ENCODE measurements at regions of chr18 and their contacts with region 1.

Region 1: DNA sequence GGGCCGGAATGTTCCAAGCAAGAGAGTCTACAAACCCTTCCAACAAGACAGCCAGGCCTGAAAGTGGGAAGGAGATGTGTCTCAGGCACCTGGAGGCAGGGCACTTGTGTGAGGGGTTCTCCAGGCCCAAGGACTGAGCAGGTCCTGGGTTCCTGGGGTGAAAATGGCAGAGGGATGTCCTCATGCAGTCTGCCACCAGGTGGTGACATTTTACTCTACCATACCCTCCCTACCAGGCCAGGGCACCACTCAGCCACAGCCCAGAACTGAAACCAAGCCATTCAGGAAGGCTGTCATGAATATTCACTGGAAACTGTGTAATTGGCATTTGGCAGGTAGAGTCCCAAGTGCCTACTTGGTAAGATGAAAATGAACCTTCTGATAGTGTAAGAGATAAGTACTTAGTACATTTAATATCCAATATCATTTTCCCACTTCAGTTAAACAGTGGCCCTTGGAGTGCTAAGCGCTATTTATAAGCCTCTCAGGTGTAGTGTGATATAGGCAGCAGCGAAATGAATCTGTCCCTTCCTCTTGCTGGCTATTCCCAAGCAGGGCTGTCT is 185.1 kb downstream of the MYO5B start:
- DNase-seq: peak; percentile 83
- H3K4me3 Mint-ChIP-seq: no peak overlapping the region
- H3K27ac Mint-ChIP-seq: no peak overlapping the region
- H3K4me1 Mint-ChIP-seq: peaks cover 1% of the 10 kb centered on the region
- H3K27me3 Mint-ChIP-seq: peaks cover 6% of the 10 kb centered on the region

Region 2: DNA sequence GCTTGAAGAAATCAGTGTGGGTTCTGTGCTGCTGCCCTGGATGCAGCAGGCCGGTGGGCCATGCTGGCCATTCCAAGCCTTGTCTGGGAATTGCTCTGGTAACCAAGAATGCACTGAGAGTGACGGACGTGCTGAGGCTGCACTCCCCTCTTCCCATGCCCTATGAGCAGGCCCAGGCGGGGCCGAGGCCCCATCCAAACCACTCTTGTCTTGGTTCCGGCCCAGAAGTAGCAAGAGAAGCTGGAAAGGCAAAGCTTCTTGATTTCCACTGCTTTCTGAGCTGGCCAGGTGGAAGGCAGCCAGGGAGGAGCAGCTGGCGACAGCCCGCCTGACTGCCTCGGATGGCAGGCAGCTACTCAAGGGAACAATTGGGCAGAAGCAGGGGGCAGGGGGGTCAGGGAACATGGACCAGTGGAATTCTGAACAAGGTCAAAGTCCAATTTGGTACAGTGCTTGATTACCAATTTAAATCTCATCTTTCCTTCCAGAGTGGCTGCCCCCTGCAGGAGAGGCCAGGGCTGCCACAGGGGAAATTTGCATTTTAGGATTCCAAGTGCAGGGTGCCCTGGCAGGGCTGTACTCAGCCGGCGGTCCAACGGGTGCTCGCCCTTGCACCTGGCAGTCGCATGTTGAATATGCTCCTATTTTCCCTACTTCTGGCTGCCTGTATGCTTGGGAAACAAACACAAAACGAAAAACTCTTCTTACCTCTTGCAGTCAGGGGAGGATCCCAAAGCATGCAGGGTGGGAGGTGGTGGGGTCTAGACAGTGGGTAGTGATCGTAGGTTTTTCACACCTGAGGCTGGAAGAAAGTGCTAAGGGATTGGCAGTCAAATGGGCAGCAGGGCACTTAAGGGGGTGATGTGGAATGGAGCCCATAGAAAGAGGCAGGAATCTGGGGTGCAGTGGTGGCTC is 380.7 kb before region 1 on chr18:
- intact Hi-C with region 1: no loop called
- DNase-seq: no peak
- H3K4me3 Mint-ChIP-seq: no peak overlapping the region
- H3K27ac Mint-ChIP-seq: no peak overlapping the region
- H3K4me1 Mint-ChIP-seq: no peaks in the 10 kb centered on the region
- H3K27me3 Mint-ChIP-seq: peaks cover 1% of the 10 kb centered on the region

Region 3: GRCh38 chr18:50194631-50195532 is 185.0 kb after region 1 on chr18 and contains the start of gene MYO5B:
- intact Hi-C with region 1: loop called (anchors 10 kb)
- DNase-seq: peak; percentile 84
- H3K4me3 Mint-ChIP-seq: peak within 1 kb of the TSS; percentile 68
- H3K27ac Mint-ChIP-seq: peak within 1 kb of the TSS; percentile 44
- H3K4me1 Mint-ChIP-seq: peaks cover 4% of the 10 kb centered on the region
- H3K27me3 Mint-ChIP-seq: peaks cover 67% of the 10 kb centered on the region
- total RNA-seq, gene MYO5B: 0.07 and 0.14 TPM in 2 replicates

Measured in activated CD4-positive, alpha-beta T cell treated with anti-CD3 and anti-CD28 coated beads, Interleukin-2, amount 10 ng/mL, durations not matched to agents 24 days and 14 days (primary cell).